ENCODE measurements at regions of chr11 and their contacts with region 1.

Region 1: DNA sequence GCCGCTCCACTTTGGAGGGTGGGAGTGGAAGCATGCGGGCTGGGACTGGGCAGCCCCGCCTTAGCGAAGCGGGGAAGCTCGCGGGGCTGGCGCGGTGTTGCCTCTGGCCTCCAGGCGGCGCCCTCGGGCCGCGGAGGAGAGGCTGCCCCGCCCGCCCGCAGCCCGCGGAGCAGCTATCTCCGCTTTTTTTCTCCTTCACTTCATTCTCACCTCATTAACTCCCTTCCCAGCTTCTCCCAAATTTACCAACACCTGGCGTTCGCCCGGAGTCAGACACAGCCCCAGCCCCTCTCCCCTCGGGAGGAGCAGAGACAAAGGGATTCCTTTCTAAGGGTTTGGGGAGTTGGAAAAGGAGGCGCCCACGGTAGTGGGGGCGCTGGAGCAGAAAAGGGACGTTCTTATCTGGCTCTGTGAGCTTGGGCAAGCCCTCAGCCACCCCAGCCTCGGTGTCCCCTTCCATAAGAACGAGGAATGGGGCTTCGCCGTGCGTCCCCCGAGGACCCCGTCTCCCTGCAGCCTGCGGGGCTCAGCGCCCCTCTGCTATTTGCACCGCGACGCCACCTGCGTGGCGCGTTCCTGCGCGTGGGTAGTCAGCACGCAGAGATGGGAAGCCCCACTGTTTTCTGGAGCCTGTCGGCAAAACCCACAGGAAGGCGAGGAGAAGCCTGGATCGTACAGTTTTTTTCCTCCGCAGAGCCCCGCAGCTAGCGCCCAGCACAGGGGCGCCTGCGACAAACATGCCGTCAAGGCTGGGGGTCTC is 1.5 kb upstream of the WNT11 start:
- DNase-seq: peak; percentile 55 to 86 (median 80)
- ATAC-seq: peak; percentile 89
- H3K4me3 ChIP-seq: peak overlapping the region; percentile 71
- H3K4me3 Mint-ChIP-seq: peak overlapping the region; percentile 78 to 93 (median 84)
- H3K27ac ChIP-seq: no peak overlapping the region
- H3K27ac Mint-ChIP-seq: peak overlapping the region in 2 of 9 donors; percentile 18 to 32
- H3K4me1 ChIP-seq: peaks cover 10 to 17% of the 10 kb centered on the region in 2 donors
- H3K4me1 Mint-ChIP-seq: peaks cover 6 to 28% (median 18%) of the 10 kb centered on the region in 7 donors
- H3K27me3 ChIP-seq: peaks cover 0 to 12% of the 10 kb centered on the region in 2 donors
- H3K27me3 Mint-ChIP-seq: peaks cover 32 to 67% (median 45%) of the 10 kb centered on the region in 5 donors

Region 2: DNA sequence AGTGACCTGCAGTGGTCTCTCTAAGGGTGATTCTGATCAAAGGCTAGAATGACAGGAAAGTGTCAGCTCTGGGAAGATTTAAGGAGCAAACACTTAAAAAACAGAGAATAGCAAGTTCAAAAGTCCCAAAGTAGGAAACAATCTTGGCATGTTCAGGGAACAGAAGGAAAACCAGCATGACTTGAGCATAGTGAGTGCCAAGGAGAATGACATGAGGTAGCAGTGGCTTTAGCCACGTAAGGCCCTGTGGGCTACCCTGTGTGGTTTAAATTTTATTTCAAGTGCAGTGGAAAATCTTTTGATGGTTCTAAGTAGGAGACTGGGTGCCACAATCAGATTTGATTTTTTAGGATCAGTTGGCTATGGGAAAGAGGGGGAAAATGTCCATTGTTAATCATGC is 150.9 kb before region 1 on chr11:
- CTCF ChIA-PET with region 1: no interaction called
- POLR2A ChIA-PET with region 1: no interaction called
- intact Hi-C with region 1: no loop called
- DNase-seq: no peak
- ATAC-seq: no peak
- H3K4me3 ChIP-seq: no peak overlapping the region
- H3K4me3 Mint-ChIP-seq: no peak overlapping the region
- H3K27ac ChIP-seq: no peak overlapping the region
- H3K27ac Mint-ChIP-seq: peak overlapping the region in 1 of 9 donors; percentile 50
- H3K4me1 ChIP-seq: no peaks in the 10 kb centered on the region
- H3K4me1 Mint-ChIP-seq: peaks cover 0 to 17% (median 0%) of the 10 kb centered on the region in 7 donors
- H3K27me3 ChIP-seq: no peaks in the 10 kb centered on the region
- H3K27me3 Mint-ChIP-seq: no peaks in the 10 kb centered on the region

Region 3: GRCh38 chr11:76235233-76236091 is 27.6 kb after region 1 on chr11:
- CTCF ChIA-PET with region 1: interaction called, 10 read pairs
- POLR2A ChIA-PET with region 1: interaction called, 9 read pairs
- intact Hi-C with region 1: loop called (anchors 1 kb)
- DNase-seq: peak; percentile 79 to 95 (median 92)
- ATAC-seq: peak; percentile 87
- H3K4me3 ChIP-seq: peak overlapping the region; percentile 98
- H3K4me3 Mint-ChIP-seq: peak overlapping the region; percentile 82 to 94 (median 91)
- H3K27ac ChIP-seq: peak overlapping the region; percentile 57
- H3K27ac Mint-ChIP-seq: peak overlapping the region; percentile 89 to 99 (median 96)
- H3K4me1 ChIP-seq: peaks cover 26 to 40% of the 10 kb centered on the region in 2 donors
- H3K4me1 Mint-ChIP-seq: peaks cover 16 to 65% (median 55%) of the 10 kb centered on the region in 7 donors
- H3K27me3 ChIP-seq: no peaks in the 10 kb centered on the region
- H3K27me3 Mint-ChIP-seq: peaks cover 0 to 30% (median 0%) of the 10 kb centered on the region in 5 donors

Region 4: GRCh38 chr11:76293189-76293631 is 85.4 kb after region 1 on chr11:
- CTCF ChIA-PET with region 1: interaction called, 25 read pairs
- POLR2A ChIA-PET with region 1: interaction called, 3 read pairs
- intact Hi-C with region 1: loop called in 1 of 2 experiments (anchors 1 kb)
- DNase-seq: no peak
- ATAC-seq: no peak
- H3K4me3 ChIP-seq: no peak overlapping the region
- H3K4me3 Mint-ChIP-seq: peak overlapping the region in 9 of 10 donors; percentile 4 to 77 (median 36)
- H3K27ac ChIP-seq: no peak overlapping the region
- H3K27ac Mint-ChIP-seq: peak overlapping the region in 7 of 9 donors; percentile 36 to 96 (median 73)
- H3K4me1 ChIP-seq: peaks cover 0 to 12% of the 10 kb centered on the region in 2 donors
- H3K4me1 Mint-ChIP-seq: peaks cover 12 to 37% (median 28%) of the 10 kb centered on the region in 7 donors
- H3K27me3 ChIP-seq: no peaks in the 10 kb centered on the region
- H3K27me3 Mint-ChIP-seq: peaks cover 0 to 2% (median 0%) of the 10 kb centered on the region in 5 donors

Region 5: DNA sequence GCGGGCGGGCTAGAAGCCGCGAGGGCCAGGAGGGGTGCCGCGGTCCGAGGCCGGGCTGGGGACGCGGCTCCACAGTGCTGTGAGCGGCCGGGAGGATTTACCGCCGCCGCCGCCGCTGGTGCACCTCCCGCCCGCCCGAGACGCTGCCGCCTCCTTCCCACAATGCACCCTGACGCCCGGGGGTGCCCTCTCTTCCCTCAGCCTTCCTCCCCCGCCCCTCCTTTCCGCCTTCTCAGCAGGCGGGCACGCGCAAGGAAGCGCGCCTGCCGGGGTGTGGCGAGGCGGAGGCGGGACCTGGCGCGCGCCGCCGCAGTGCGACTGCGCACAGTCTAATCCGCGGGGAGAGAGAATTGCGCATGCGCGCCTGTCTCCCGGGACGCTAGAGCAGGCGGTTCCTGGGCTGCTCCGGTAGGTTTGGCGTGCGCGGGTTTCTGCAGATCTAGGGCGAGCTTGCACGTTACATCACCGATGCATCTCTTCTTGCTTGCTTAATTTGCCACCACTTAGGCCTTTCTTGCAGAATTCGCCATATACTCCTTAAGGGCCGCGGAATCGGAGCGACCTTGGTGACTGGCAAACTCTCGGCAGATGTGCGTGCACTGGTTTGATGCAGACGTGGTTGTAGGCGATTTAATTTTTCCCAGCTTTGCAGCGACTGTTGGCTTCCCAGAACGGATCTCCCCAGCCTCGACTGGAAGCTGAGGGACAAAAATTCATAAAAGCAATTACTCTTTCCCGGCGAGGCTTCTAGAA is 173.3 kb after region 1 on chr11 and contains the starts of genes GVQW3 and THAP12:
- CTCF ChIA-PET with region 1: no interaction called
- POLR2A ChIA-PET with region 1: no interaction called
- intact Hi-C with region 1: loop called (anchors 1 kb)
- DNase-seq: peak; percentile 96 to 99 (median 98)
- ATAC-seq: peak; percentile 96
- H3K4me3 ChIP-seq: peak within 1 kb of the TSS; percentile 86
- H3K4me3 Mint-ChIP-seq: peak within 1 kb of the TSS; percentile 92 to 98 (median 97)
- H3K27ac ChIP-seq: peak within 1 kb of the TSS; percentile 72
- H3K27ac Mint-ChIP-seq: peak within 1 kb of the TSS; percentile 75 to 98 (median 92)
- H3K4me1 ChIP-seq: peaks cover 22 to 43% of the 10 kb centered on the region in 2 donors
- H3K4me1 Mint-ChIP-seq: peaks cover 51 to 76% (median 69%) of the 10 kb centered on the region in 7 donors
- H3K27me3 ChIP-seq: no peaks in the 10 kb centered on the region
- H3K27me3 Mint-ChIP-seq: no peaks in the 10 kb centered on the region
- total RNA-seq, gene GVQW3: 3.6 to 9.1 (median 6.7) TPM
- total RNA-seq, gene THAP12: 40.3 to 57.9 (median 51.1) TPM

Region 6: GRCh38 chr11:76512851-76513653 is 305.2 kb after region 1 on chr11:
- CTCF ChIA-PET with region 1: no interaction called
- POLR2A ChIA-PET with region 1: no interaction called
- intact Hi-C with region 1: loop called in 1 of 2 experiments (anchors 5 kb)
- DNase-seq: no peak
- ATAC-seq: no peak
- H3K4me3 ChIP-seq: no peak overlapping the region
- H3K4me3 Mint-ChIP-seq: no peak overlapping the region
- H3K27ac ChIP-seq: no peak overlapping the region
- H3K27ac Mint-ChIP-seq: peak overlapping the region in 1 of 9 donors; percentile 9
- H3K4me1 ChIP-seq: no peaks in the 10 kb centered on the region
- H3K4me1 Mint-ChIP-seq: peaks cover 0 to 2% (median 0%) of the 10 kb centered on the region in 7 donors
- H3K27me3 ChIP-seq: no peaks in the 10 kb centered on the region
- H3K27me3 Mint-ChIP-seq: no peaks in the 10 kb centered on the region